Ascending aorta (tissue), 2 donors: ENCODE measurements at regions of chr1 and their contacts with region 1.

Region 1: GRCh38 chr1:115164484-115164883 is 75.2 kb upstream of the TSPAN2 start:
- DNase-seq: peak; percentile 24 to 81
- H3K4me3 ChIP-seq: no peak overlapping the region
- H3K27ac ChIP-seq: peak overlapping the region in 1 of 2 donors; percentile 33
- H3K4me1 ChIP-seq: peaks cover 0 to 3% of the 10 kb centered on the region in 2 donors
- H3K27me3 ChIP-seq: no peaks in the 10 kb centered on the region
- CTCF ChIP-seq: no peak

Region 2: GRCh38 chr1:114959423-114959822 is 205.1 kb before region 1 on chr1:
- intact Hi-C with region 1: no loop called
- DNase-seq: no peak
- H3K4me3 ChIP-seq: no peak overlapping the region
- H3K27ac ChIP-seq: no peak overlapping the region
- H3K4me1 ChIP-seq: no peaks in the 10 kb centered on the region
- H3K27me3 ChIP-seq: no peaks in the 10 kb centered on the region
- CTCF ChIP-seq: no peak

Region 3: DNA sequence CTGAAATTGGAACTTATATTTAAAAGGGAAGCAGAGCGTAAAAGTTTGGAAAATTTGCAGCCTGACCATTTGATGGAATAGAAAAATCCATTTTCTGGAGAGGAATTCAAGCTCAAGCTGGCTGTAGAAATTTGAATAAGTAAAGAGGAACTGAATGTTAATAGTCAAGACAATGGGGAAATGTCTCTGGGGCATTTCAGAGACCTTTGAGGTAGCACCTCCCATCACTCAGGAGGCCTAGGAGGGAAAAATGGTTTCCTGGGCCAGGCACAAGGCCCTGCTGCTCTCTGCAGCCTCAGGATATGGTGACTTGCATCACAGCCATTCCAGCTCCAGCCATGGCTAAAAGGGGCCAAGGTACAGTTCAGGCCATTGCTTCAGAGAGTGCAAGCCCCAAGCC is 152.5 kb before region 1 on chr1:
- intact Hi-C with region 1: no loop called
- DNase-seq: no peak
- H3K4me3 ChIP-seq: no peak overlapping the region
- H3K27ac ChIP-seq: no peak overlapping the region
- H3K4me1 ChIP-seq: no peaks in the 10 kb centered on the region
- H3K27me3 ChIP-seq: no peaks in the 10 kb centered on the region
- CTCF ChIP-seq: no peak

Region 4: GRCh38 chr1:115133440-115133839 is 31.0 kb before region 1 on chr1:
- intact Hi-C with region 1: no loop called
- DNase-seq: no peak
- H3K4me3 ChIP-seq: no peak overlapping the region
- H3K27ac ChIP-seq: peak overlapping the region; percentile 92 to 97
- H3K4me1 ChIP-seq: peaks cover 12 to 43% of the 10 kb centered on the region in 2 donors
- H3K27me3 ChIP-seq: no peaks in the 10 kb centered on the region
- CTCF ChIP-seq: no peak

Region 5: DNA sequence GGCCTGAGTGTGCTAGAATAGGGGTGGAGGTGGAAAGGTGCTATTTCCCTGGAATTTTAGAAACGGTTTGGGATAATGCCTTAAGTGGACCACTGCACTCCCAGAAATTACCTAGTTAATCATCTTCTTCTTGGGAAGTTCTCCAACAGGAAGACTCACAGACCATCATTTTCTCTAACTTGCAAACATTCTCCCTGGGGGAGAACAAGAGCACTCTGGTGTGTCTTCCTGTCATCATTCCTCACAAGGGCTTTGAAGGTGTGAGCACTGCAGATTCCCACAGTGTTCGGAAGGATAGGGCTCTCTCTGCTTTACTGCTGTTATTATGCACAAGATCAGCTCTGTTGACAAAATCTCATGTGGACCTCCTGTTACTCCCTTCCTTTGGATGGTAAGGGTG is 20.3 kb before region 1 on chr1:
- intact Hi-C with region 1: no loop called
- DNase-seq: no peak
- H3K4me3 ChIP-seq: no peak overlapping the region
- H3K27ac ChIP-seq: no peak overlapping the region
- H3K4me1 ChIP-seq: peaks cover 2 to 8% of the 10 kb centered on the region in 2 donors
- H3K27me3 ChIP-seq: no peaks in the 10 kb centered on the region
- CTCF ChIP-seq: no peak

Region 6: GRCh38 chr1:115184951-115185331 is 20.5 kb after region 1 on chr1:
- intact Hi-C with region 1: loop called (anchors 1 kb)
- DNase-seq: peak; percentile 58 to 89
- H3K4me3 ChIP-seq: peak overlapping the region; percentile 12 to 50
- H3K27ac ChIP-seq: peak overlapping the region; percentile 89 to 95
- H3K4me1 ChIP-seq: peaks cover 16 to 39% of the 10 kb centered on the region in 2 donors
- H3K27me3 ChIP-seq: no peaks in the 10 kb centered on the region
- CTCF ChIP-seq: no peak